Heart right ventricle (tissue), 16 donors: ENCODE measurements at regions of chr11 and their contacts with region 1.

Region 1: GRCh38 chr11:93543292-93543977 is at the start of gene SMCO4:
- DNase-seq: peak; percentile 84 to 89
- ATAC-seq: peak; percentile 90 to 97 (median 93)
- H3K4me3 ChIP-seq: peak within 1 kb of the TSS; percentile 67 to 93 (median 89)
- H3K27ac ChIP-seq: peak within 1 kb of the TSS; percentile 66 to 94 (median 91)
- H3K4me1 ChIP-seq: peaks cover 5 to 50% (median 34%) of the 10 kb centered on the region in 9 donors
- H3K27me3 ChIP-seq: no peaks in the 10 kb centered on the region
- CTCF ChIP-seq: peak; percentile 66 to 91 (median 82)
- total RNA-seq, gene SMCO4: 30.1 to 59.0 (median 44.8) TPM

Region 2: DNA sequence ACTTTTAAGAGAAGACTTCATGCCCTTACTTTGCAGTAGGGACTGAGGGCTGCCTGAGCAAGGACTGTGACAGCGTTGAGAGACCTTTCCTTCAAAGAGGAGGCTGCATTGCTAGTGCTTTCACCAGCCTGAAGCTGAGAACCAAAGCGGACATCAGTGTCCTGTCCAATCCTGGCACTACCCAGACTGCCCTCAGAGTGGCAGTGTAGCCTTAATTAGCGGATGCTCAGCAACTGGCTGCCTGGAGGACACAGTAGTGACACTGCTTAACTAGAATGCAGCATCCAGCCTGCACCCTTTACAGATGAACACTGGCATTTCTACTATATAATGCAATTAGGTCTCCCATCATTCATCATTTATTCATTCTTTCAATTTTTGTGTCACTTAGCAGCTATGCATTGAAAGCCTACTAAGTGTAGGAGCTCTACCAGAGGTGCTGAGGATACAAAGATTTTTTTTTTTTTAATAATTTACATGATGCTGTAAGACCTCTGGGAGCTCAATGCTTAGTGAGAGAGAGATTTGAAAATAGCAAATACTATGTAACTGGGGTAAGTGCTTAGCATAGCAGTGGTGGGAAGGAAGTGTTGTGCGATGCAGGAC is 308.7 kb before region 1 on chr11:
- intact Hi-C with region 1: loop called (anchors 1 to 5 kb)
- DNase-seq: peak; percentile 57 to 76
- ATAC-seq: peak; percentile 90 to 99 (median 96)
- H3K4me3 ChIP-seq: no peak overlapping the region
- H3K27ac ChIP-seq: no peak overlapping the region
- H3K4me1 ChIP-seq: peaks cover 0 to 5% (median 0%) of the 10 kb centered on the region in 9 donors
- H3K27me3 ChIP-seq: peaks cover 0 to 13% (median 0%) of the 10 kb centered on the region in 7 donors
- CTCF ChIP-seq: peak; percentile 72 to 96 (median 91)

Region 3: GRCh38 chr11:93481701-93482100 is 61.7 kb before region 1 on chr11:
- intact Hi-C with region 1: loop called in 4 of 10 experiments (anchors 5 to 10 kb)
- DNase-seq: no peak
- ATAC-seq: peak; percentile 34 to 78 (median 66)
- H3K4me3 ChIP-seq: no peak overlapping the region
- H3K27ac ChIP-seq: no peak overlapping the region
- H3K4me1 ChIP-seq: peaks cover 0 to 24% (median under 1%) of the 10 kb centered on the region in 9 donors
- H3K27me3 ChIP-seq: no peaks in the 10 kb centered on the region
- CTCF ChIP-seq: peak in 5 of 9 donors; percentile 7 to 45 (median 32)

Region 4: DNA sequence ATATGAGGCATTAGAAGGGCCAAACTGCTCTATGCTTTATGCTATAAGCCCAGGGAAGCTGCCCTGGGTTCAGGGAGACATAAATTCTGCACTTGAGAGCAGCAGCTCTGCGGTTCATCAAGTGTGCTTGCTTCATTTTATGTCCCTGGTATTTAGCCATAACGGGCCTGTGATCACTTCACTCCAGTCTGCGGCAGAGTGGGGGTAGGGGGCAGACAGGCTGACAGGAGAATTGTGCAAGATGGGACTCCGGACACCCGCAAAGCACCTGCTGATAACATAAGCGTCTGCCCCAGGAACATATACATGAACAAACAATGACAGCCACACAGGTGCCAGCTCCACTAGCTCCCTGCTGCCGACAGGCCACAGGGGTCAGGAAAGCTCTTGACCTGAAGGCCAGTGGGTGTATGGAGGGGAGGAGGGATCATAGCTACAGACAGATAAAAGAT is 56.4 kb before region 1 on chr11:
- intact Hi-C with region 1: loop called in 4 of 10 experiments (anchors 5 to 10 kb)
- DNase-seq: no peak
- ATAC-seq: peak in 4 of 8 donors; percentile 22 to 57 (median 45)
- H3K4me3 ChIP-seq: no peak overlapping the region
- H3K27ac ChIP-seq: no peak overlapping the region
- H3K4me1 ChIP-seq: peaks cover 0 to 24% (median 7%) of the 10 kb centered on the region in 9 donors
- H3K27me3 ChIP-seq: no peaks in the 10 kb centered on the region
- CTCF ChIP-seq: no peak

Region 5: GRCh38 chr11:93652161-93652597 is 108.7 kb after region 1 on chr11:
- intact Hi-C with region 1: loop called in 7 of 10 experiments (anchors 5 to 10 kb)
- DNase-seq: peak in 1 of 2 donors; percentile 30
- ATAC-seq: peak in 1 of 8 donors; percentile 17
- H3K4me3 ChIP-seq: no peak overlapping the region
- H3K27ac ChIP-seq: no peak overlapping the region
- H3K4me1 ChIP-seq: peaks cover 0 to 21% (median 0%) of the 10 kb centered on the region in 9 donors
- H3K27me3 ChIP-seq: peaks cover 0 to 22% (median 3%) of the 10 kb centered on the region in 7 donors
- CTCF ChIP-seq: peak; percentile 69 to 88 (median 82)